Left cardiac atrium (tissue), 4 donors: ENCODE measurements at regions of chr1 and their contacts with region 1.

Region 1: GRCh38 chr1:165686121-165686970 is 12.0 kb downstream of the ALDH9A1 start:
- DNase-seq: no peak
- ATAC-seq: no peak

Region 2: GRCh38 chr1:165610885-165611284 is 75.5 kb before region 1 on chr1:
- intact Hi-C with region 1: loop called in 1 of 2 experiments (anchors 10 kb)
- DNase-seq: no peak
- ATAC-seq: no peak

Region 3: GRCh38 chr1:166089804-166090203 is 403.5 kb after region 1 on chr1:
- intact Hi-C with region 1: no loop called
- DNase-seq: no peak
- ATAC-seq: no peak